Right ventricle myocardium inferior (tissue), 1 donor: ENCODE measurements at regions of chr19 and their contacts with region 1.

Region 1: DNA sequence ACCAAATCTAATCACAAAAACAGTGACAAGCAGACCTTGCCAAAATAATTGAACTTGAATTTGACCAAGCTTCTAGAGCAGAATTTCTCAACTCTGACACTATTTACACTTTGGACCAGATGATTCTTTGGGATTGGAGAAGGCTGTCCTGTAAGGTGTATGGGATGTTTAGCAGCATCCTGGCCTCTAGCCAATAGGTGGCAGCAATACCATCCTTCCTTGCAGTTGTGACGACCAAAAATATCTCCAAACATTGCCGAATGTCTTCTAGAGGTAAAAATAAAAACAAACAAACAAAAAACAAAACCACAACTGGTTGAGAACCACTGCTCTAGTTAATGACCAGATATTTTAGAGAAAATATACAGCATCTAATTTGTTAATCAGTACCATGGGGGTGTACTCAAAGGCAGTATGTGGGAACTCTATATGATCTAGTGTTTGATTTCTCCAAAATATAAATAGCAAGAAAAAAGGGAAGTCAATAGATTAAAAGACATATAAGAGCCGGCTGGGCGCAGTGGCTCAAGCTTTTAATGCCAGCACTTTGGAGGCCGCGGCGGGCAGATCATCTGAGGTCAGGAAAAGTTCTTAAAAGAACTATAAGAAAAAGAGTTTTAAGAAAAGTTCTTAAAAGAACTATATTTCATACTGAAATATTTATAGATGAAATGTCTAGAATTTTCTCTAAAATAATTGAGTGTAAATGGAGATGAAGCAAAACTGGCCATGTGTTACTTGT is 60.9 kb upstream of the ZNF527 start:
- DNase-seq: no peak
- ATAC-seq: no peak

Region 2: DNA sequence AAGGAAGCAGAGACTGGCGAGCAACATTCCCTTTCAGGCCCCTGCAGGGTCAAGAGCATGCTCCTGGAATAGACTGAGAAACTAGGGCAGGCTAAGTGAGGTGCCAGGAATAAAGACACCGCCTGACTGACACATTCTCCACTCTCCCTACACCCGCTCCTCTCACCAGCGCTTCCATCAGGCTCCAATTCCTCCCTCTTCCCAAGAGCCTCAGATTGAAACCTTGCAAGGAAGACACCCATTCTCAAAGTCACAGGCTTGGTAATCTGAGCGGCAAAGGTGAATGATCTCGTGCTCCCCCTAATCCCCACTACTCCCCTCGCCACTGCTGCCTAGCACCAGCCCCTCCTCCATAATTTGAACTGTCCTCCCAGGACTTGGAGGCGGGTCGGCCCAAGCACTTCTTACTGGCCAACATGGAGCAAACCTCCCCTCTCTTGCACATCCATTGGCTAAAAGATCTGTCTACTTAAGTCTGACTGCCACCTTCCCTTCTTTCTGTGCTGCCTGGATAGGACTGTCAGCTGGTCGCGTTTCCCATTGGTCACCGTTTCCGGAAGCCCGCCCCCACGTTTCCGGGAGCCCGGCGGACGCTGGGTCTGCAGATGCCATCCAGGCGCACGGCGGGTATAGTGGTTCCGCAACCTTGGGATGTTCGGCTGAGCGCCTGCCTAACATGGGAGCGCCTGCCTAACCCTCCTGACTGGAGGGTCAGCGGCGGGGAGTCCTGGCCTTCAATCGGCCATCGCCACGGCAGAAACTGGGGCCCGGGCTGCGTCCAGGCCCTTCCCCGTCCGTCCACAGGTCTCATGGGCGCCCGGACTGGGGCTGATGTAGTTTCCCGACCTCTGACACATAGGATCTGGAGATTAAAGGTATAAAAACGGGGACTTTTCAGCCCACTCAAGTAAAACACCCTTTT is 58.4 kb before region 1 on chr19:
- intact Hi-C with region 1: loop called (anchors 10 kb)
- DNase-seq: peak; percentile 78
- ATAC-seq: peak; percentile 98